Motor neuron (in vitro differentiated cells): ENCODE measurements at regions of chr7 and their contacts with region 1.

Region 1: GRCh38 chr7:129468087-129468486 is 33.9 kb downstream of the STRIP2 start:
- ATAC-seq: peak in 3 of 8 experiments; percentile 25 to 58 (median 49)
- H3K4me3 ChIP-seq: no peak overlapping the region
- H3K27ac ChIP-seq: no peak overlapping the region
- H3K4me1 ChIP-seq: no peaks in the 10 kb centered on the region

Region 2: DNA sequence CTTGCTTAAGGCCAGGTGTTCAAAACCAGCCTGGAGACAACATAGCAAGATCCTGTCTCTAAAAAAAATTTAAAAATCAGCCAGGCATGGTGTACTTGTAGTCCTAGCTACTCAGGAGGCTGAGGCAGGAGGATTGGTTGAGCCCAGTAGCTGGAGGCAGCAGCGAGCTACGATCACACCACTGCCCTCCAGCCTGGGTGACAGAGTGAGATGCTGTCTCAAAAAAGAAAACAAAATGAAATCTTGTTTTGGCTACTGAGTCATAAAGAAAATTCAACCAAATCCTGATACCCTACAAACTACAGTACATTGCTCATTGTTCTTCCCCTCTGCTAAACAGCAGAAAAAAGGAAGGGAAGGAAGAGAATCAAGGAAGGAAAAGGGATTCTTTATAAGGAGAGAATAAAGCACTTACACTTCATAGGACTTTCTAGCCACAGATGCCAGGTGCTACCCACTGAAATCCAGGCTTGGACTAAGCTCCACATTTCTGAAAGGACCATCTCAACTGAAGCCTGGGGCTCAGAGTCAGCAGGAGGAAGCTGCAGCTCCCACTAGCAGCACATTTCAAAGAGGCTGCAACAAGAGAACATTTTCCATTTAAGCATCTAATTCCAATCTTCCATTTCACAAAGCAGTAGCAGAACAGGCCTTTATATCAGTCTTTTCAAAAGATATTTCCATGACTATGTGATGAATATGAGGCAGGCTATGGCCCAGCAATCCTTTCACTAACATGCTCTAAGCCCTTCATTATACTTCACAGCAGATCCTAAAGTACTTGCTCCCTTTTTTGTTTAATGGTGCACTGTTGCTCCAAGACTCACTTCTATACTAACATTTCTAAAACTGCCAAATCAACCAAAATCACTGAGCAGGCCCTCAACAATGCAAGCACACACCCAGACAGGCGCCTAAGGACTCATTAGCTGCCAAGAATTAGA is 426.7 kb before region 1 on chr7:
- in situ Hi-C with region 1: no loop called
- ATAC-seq: peak in 2 of 8 experiments; percentile 16 to 18
- H3K4me3 ChIP-seq: no peak overlapping the region
- H3K27ac ChIP-seq: no peak overlapping the region
- H3K4me1 ChIP-seq: peaks cover 5 to 9% of the 10 kb centered on the region in 2 donors

Region 3: GRCh38 chr7:129367700-129368388 is 100.2 kb before region 1 on chr7:
- in situ Hi-C with region 1: loop called in 1 of 9 experiments (anchors 10 kb)
- ATAC-seq: peak; percentile 84 to 95 (median 92)
- H3K4me3 ChIP-seq: peak overlapping the region in 1 of 5 donors; percentile 0
- H3K27ac ChIP-seq: no peak overlapping the region
- H3K4me1 ChIP-seq: peaks cover 9 to 14% of the 10 kb centered on the region in 2 donors